ENCODE measurements at regions of chr3 and their contacts with region 1.

Region 1: GRCh38 chr3:140056043-140056442 is 121.1 kb downstream of the CLSTN2 start:
- DNase-seq: no peak
- H3K4me3 ChIP-seq: no peak overlapping the region
- H3K27ac ChIP-seq: no peak overlapping the region
- H3K4me1 ChIP-seq: peaks cover 0 to 9% (median 4%) of the 10 kb centered on the region in 4 donors
- H3K27me3 ChIP-seq: no peaks in the 10 kb centered on the region
- CTCF ChIP-seq: no peak
- EP300 ChIP-seq: no peak
- POLR2A ChIP-seq: no peak

Region 2: DNA sequence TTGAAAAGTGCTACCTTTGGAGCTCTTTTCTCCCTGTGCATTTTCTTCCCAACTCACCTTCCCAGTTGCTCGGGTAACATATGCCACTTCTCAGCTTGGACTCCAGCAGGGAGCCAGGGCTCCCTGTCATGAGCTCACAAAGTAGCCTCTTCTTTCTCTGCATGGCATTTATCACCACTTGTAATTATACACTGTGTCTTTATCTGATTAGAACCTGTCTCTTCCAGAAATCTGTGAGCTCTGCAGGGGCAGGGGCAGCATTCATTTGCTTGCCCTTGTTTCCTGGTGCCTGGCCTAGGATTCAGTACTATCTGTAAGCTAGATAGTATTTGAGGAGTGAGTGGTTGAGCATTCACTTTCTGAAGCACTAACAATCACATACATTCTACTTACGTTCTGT is 20.2 kb before region 1 on chr3:
- intact Hi-C with region 1: loop called (anchors 1 kb)
- DNase-seq: no peak
- H3K4me3 ChIP-seq: no peak overlapping the region
- H3K27ac ChIP-seq: no peak overlapping the region
- H3K4me1 ChIP-seq: no peaks in the 10 kb centered on the region
- H3K27me3 ChIP-seq: no peaks in the 10 kb centered on the region
- CTCF ChIP-seq: no peak
- EP300 ChIP-seq: no peak
- POLR2A ChIP-seq: no peak

Region 3: GRCh38 chr3:140160553-140160952 is 104.5 kb after region 1 on chr3:
- intact Hi-C with region 1: no loop called
- DNase-seq: no peak
- H3K4me3 ChIP-seq: no peak overlapping the region
- H3K27ac ChIP-seq: no peak overlapping the region
- H3K4me1 ChIP-seq: no peaks in the 10 kb centered on the region
- H3K27me3 ChIP-seq: no peaks in the 10 kb centered on the region
- CTCF ChIP-seq: no peak
- EP300 ChIP-seq: no peak
- POLR2A ChIP-seq: no peak

Region 4: DNA sequence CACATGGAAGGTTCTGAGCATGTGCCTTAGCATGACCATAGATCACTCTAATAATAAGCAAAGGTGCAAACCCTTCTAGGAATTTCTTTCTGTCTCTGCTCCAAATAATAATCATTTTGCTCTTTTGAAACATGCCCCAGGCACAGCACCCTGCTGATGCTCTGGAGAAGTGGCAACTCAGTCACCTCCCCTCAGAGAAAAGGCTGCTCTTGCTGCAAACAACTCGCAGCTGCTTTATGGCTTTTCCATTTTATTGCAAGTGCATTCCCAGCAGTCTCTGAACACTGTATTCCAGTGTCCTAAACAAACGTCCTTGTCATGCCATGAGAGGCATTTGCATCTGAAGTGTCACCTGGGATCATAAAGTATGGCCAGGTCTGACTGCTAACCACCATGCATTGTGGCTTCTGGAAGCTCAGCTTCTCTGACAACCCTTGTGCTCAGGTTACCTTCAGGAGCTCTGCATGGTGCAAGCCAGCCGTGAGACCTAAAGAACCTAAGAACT is 263.7 kb after region 1 on chr3:
- intact Hi-C with region 1: no loop called
- DNase-seq: no peak
- H3K4me3 ChIP-seq: no peak overlapping the region
- H3K27ac ChIP-seq: no peak overlapping the region
- H3K4me1 ChIP-seq: no peaks in the 10 kb centered on the region
- H3K27me3 ChIP-seq: no peaks in the 10 kb centered on the region
- CTCF ChIP-seq: no peak
- EP300 ChIP-seq: no peak
- POLR2A ChIP-seq: no peak

Measured in esophagus muscularis mucosa (tissue), 4 donors.